Ascending aorta (tissue), 2 donors: ENCODE measurements at regions of chr16 and their contacts with region 1.

Region 1: DNA sequence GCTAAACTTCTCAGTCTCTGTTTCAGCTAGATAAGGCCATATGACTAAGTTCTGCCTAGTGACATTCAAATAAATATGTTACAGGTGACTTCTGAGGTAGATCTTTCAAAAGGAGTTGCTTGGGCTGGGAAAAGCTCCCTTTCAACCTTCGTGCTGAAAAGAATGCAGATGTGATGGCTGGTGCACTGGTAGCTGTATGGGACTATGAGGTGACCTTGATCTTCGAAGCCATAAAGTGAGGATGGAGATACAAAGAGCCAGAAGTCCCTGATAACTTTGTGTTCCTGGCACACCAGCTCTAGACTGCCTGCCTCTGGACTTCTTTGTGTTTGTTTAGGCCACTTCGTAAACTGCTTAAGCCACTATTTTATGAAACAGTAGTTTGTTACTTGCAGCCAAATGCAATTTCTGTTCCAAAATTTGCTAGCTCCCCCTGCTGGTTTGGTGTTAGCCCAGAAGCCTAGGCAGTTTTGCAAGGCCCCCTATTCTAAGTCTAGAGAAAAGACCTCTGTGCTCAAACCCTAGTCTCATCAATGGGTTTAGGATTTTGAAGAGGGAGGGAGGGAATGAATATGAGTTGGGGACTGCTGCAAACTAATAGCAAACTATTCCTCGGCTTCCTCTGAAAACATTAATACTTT is 23.3 kb upstream of the ERCC4 start:
- DNase-seq: no peak
- H3K4me3 ChIP-seq: no peak overlapping the region
- H3K27ac ChIP-seq: no peak overlapping the region
- H3K4me1 ChIP-seq: peaks cover 0 to 13% of the 10 kb centered on the region in 2 donors
- H3K27me3 ChIP-seq: no peaks in the 10 kb centered on the region
- CTCF ChIP-seq: no peak

Region 2: DNA sequence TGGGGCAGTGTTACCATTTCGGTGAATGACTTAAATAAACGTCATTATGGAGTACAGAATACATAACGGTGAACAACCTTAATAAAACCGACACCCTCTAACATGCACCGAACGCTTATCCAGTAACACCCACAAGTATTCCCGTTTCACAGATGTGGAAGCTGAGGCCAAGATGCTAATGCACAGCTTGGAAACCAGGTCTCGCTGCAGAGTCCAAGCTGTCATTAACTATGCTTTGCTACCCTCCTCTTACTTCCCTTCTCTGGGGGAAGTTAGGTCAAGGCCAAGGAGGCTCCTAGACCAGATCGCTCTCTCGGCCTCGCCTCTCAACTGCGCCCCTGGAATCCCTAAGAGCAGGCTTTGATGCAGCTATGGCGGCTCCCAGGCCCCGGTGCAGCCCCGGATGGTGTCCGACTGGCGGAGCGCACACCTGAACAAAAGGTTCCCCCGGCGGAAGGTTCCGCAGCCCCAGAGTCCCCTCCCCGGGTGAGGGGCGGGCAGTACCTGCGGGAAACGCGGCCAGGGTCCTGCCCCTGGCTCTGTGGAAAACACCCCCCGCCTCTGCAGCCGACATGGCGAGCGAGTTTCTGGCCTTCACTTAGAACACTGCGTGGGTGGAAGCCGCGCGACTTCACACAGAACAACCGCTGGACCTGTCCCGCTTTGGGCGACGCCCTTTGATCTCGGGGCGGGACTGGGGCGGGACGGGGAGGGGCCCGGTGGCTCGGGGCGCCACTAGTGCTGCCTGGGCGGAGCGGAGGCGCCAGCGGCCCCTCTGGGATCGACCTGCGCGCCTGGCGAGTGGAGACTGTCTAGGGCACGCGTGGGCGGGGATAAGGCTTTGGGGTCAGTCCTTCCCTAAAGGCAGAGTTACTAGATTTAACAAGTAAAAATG is 1093.2 kb before region 1 on chr16 and contains the start of gene CPPED1:
- intact Hi-C with region 1: loop called (anchors 10 kb)
- DNase-seq: peak; percentile 61 to 96
- H3K4me3 ChIP-seq: peak within 1 kb of the TSS; percentile 73 to 79
- H3K27ac ChIP-seq: peak within 1 kb of the TSS; percentile 82
- H3K4me1 ChIP-seq: peaks cover 3 to 19% of the 10 kb centered on the region in 2 donors
- H3K27me3 ChIP-seq: no peaks in the 10 kb centered on the region
- CTCF ChIP-seq: no peak
- total RNA-seq, gene CPPED1: 13.3 TPM

Region 3: GRCh38 chr16:13702614-13703013 is 194.0 kb before region 1 on chr16:
- intact Hi-C with region 1: no loop called
- DNase-seq: no peak
- H3K4me3 ChIP-seq: peak overlapping the region in 1 of 2 donors; percentile 15
- H3K27ac ChIP-seq: peak overlapping the region in 1 of 2 donors; percentile 50
- H3K4me1 ChIP-seq: peaks cover 0 to 3% of the 10 kb centered on the region in 2 donors
- H3K27me3 ChIP-seq: no peaks in the 10 kb centered on the region
- CTCF ChIP-seq: no peak

Region 4: DNA sequence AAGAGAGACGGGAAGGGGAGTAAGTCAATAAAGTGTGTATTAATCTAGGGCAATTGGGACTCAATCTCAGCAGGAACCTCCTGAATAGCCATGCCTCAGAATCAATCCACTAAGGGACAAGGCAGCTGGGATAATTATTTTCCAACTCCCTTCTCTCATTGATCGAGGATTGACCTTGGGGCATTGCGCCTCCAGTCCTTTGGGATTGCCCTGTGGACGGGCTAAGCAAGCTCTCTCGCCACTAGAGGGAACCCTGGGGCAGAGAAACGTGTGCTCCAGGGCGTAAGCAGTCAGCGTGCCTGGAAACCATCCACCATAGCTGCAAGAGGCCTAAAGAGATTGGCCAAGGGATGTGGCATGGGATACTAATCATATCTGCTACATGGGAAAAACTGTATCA is 30.6 kb before region 1 on chr16:
- intact Hi-C with region 1: loop called (anchors 5 kb)
- DNase-seq: peak in 1 of 2 donors; percentile 78
- H3K4me3 ChIP-seq: no peak overlapping the region
- H3K27ac ChIP-seq: no peak overlapping the region
- H3K4me1 ChIP-seq: peaks cover 0 to 3% of the 10 kb centered on the region in 2 donors
- H3K27me3 ChIP-seq: no peaks in the 10 kb centered on the region
- CTCF ChIP-seq: peak; percentile 20 to 71 (median 67)